ENCODE measurements at regions of chr11 and their contacts with region 1.

Region 1: GRCh38 chr11:32326522-32326921 is 108.8 kb downstream of the WT1 start:
- DNase-seq: no peak
- ATAC-seq: no peak
- H3K4me3 ChIP-seq: no peak overlapping the region
- H3K4me3 Mint-ChIP-seq: no peak overlapping the region
- H3K27ac ChIP-seq: no peak overlapping the region
- H3K27ac Mint-ChIP-seq: no peak overlapping the region
- H3K4me1 ChIP-seq: no peaks in the 10 kb centered on the region
- H3K4me1 Mint-ChIP-seq: no peaks in the 10 kb centered on the region
- H3K27me3 ChIP-seq: peaks cover 0 to 3% of the 10 kb centered on the region in 2 experiments
- H3K27me3 Mint-ChIP-seq: peaks cover 14% of the 10 kb centered on the region
- CTCF ChIP-seq: no peak

Region 2: GRCh38 chr11:32315121-32315520 is 11.4 kb before region 1 on chr11:
- CTCF ChIA-PET with region 1: interaction called, 13 read pairs
- POLR2A ChIA-PET with region 1: no interaction called
- intact Hi-C with region 1: no loop called
- DNase-seq: no peak
- ATAC-seq: no peak
- H3K4me3 ChIP-seq: no peak overlapping the region
- H3K4me3 Mint-ChIP-seq: no peak overlapping the region
- H3K27ac ChIP-seq: no peak overlapping the region
- H3K27ac Mint-ChIP-seq: no peak overlapping the region
- H3K4me1 ChIP-seq: no peaks in the 10 kb centered on the region
- H3K4me1 Mint-ChIP-seq: no peaks in the 10 kb centered on the region
- H3K27me3 ChIP-seq: no peaks in the 10 kb centered on the region
- H3K27me3 Mint-ChIP-seq: peaks cover 15% of the 10 kb centered on the region
- CTCF ChIP-seq: no peak

Region 3: GRCh38 chr11:32374261-32374711 is 47.8 kb after region 1 on chr11:
- CTCF ChIA-PET with region 1: no interaction called
- POLR2A ChIA-PET with region 1: no interaction called
- intact Hi-C with region 1: no loop called
- DNase-seq: peak in 2 of 9 experiments; percentile 4 to 7
- ATAC-seq: no peak
- H3K4me3 ChIP-seq: no peak overlapping the region
- H3K4me3 Mint-ChIP-seq: no peak overlapping the region
- H3K27ac ChIP-seq: no peak overlapping the region
- H3K27ac Mint-ChIP-seq: no peak overlapping the region
- H3K4me1 ChIP-seq: no peaks in the 10 kb centered on the region
- H3K4me1 Mint-ChIP-seq: no peaks in the 10 kb centered on the region
- H3K27me3 ChIP-seq: no peaks in the 10 kb centered on the region
- H3K27me3 Mint-ChIP-seq: peaks cover 8% of the 10 kb centered on the region
- CTCF ChIP-seq: no peak

Region 4: GRCh38 chr11:32615422-32615821 is 288.9 kb after region 1 on chr11:
- CTCF ChIA-PET with region 1: no interaction called
- POLR2A ChIA-PET with region 1: no interaction called
- intact Hi-C with region 1: loop called (anchors 2 to 10 kb)
- DNase-seq: peak in 1 of 9 experiments; percentile 4
- ATAC-seq: no peak
- H3K4me3 ChIP-seq: no peak overlapping the region
- H3K4me3 Mint-ChIP-seq: no peak overlapping the region
- H3K27ac ChIP-seq: no peak overlapping the region
- H3K27ac Mint-ChIP-seq: no peak overlapping the region
- H3K4me1 ChIP-seq: no peaks in the 10 kb centered on the region
- H3K4me1 Mint-ChIP-seq: no peaks in the 10 kb centered on the region
- H3K27me3 ChIP-seq: peaks cover 0 to 8% of the 10 kb centered on the region in 2 experiments
- H3K27me3 Mint-ChIP-seq: peaks cover 4% of the 10 kb centered on the region
- CTCF ChIP-seq: no peak

Measured in CD8-positive, alpha-beta T cell (primary cell).